ENCODE measurements at regions of chr7 and their contacts with region 1.

Region 1: DNA sequence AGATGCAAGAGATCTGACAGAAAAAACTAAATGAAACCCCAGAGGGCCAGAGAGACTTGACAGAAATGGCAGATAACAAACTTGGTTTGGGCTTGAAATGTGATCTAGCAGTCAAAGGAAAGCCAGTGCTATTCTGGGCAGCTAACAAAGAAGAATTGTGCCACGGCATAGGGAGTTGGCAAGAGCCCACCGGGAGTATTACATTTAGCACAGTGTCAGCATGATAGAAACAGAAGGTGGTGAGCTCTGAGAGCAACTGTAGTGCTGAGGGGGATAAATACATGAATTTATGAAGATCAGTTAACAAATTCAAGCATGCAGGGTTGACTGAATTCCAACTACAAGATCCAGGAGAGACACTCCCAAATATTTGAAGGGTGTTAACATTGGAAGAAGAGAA is 91.1 kb downstream of the AHCYL2 start:
- DNase-seq: no peak
- ATAC-seq: no peak
- H3K4me3 ChIP-seq: no peak overlapping the region
- H3K27ac ChIP-seq: no peak overlapping the region
- H3K4me1 ChIP-seq: no peaks in the 10 kb centered on the region
- H3K27me3 ChIP-seq: no peaks in the 10 kb centered on the region
- CTCF ChIP-seq: no peak
- POLR2A ChIP-seq: no peak
- RAD21 ChIP-seq: no peak

Region 2: GRCh38 chr7:129279762-129280161 is 36.2 kb before region 1 on chr7:
- CTCF ChIA-PET with region 1: no interaction called
- POLR2A ChIA-PET with region 1: no interaction called
- dilution Hi-C with region 1: no loop called
- in situ Hi-C with region 1: no loop called
- intact Hi-C with region 1: loop called (anchors 5 kb)
- DNase-seq: no peak
- ATAC-seq: no peak
- H3K4me3 ChIP-seq: no peak overlapping the region
- H3K27ac ChIP-seq: no peak overlapping the region
- H3K4me1 ChIP-seq: no peaks in the 10 kb centered on the region
- H3K27me3 ChIP-seq: no peaks in the 10 kb centered on the region
- CTCF ChIP-seq: no peak
- POLR2A ChIP-seq: no peak
- RAD21 ChIP-seq: no peak

Region 3: DNA sequence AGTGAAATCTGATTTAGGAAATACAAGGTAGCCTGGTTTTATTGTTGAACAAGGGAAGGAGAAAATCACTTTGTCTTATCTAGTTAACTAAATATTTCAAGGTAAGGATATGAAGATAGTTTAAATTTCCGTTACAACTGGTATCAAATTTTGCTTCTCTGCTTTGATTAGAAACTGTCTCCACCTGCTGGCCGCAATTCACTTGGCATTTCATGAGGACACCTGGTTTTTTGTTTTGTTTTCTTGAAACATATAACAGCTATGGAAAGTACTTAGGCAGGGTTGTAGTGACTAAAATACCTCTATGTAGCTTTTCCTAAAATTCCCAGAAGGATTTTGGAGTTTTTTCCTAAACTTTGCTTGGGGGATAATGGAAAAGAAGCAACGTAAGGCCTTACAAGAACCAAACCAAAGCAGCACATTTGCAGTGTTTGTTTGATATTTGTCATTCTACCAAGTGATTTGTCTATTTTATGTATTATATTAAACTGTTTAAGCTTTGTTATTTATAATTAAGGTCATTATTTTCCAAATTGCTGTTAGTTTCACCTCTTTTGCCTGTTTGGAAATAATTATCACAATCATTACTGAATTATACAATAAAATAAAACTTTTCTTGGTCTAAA is 17.6 kb before region 1 on chr7:
- CTCF ChIA-PET with region 1: no interaction called
- POLR2A ChIA-PET with region 1: no interaction called
- dilution Hi-C with region 1: no loop called
- in situ Hi-C with region 1: no loop called
- intact Hi-C with region 1: no loop called
- DNase-seq: peak; percentile 51
- ATAC-seq: no peak
- H3K4me3 ChIP-seq: no peak overlapping the region
- H3K27ac ChIP-seq: no peak overlapping the region
- H3K4me1 ChIP-seq: no peaks in the 10 kb centered on the region
- H3K27me3 ChIP-seq: no peaks in the 10 kb centered on the region
- CTCF ChIP-seq: peak; percentile 72
- POLR2A ChIP-seq: no peak
- RAD21 ChIP-seq: peak; percentile 70

Measured in IMR-90 (cell line).